ENCODE measurements at regions of chr1 and their contacts with region 1.

Region 1: GRCh38 chr1:161738627-161739287 is 10.8 kb upstream of the DUSP12 start:
- DNase-seq: peak; percentile 48 to 85 (median 59)
- H3K4me3 ChIP-seq: no peak overlapping the region
- H3K4me3 Mint-ChIP-seq: peak overlapping the region in 5 of 7 donors; percentile 45 to 75 (median 66)
- H3K27ac ChIP-seq: no peak overlapping the region
- H3K27ac Mint-ChIP-seq: peak overlapping the region; percentile 51 to 89 (median 86)
- H3K4me1 ChIP-seq: peaks cover 31% of the 10 kb centered on the region
- H3K4me1 Mint-ChIP-seq: peaks cover 26 to 48% (median 44%) of the 10 kb centered on the region in 3 donors
- H3K27me3 ChIP-seq: no peaks in the 10 kb centered on the region
- H3K27me3 Mint-ChIP-seq: peaks cover 0 to 2% of the 10 kb centered on the region in 2 donors

Region 2: GRCh38 chr1:161132410-161133219 is 606.1 kb before region 1 on chr1 and contains the start of gene DEDD:
- CTCF ChIA-PET with region 1: no interaction called
- POLR2A ChIA-PET with region 1: no interaction called
- DNase-seq: peak; percentile 84 to 95 (median 91)
- H3K4me3 ChIP-seq: peak within 1 kb of the TSS; percentile 98
- H3K4me3 Mint-ChIP-seq: no peak within 1 kb of the TSS
- H3K27ac ChIP-seq: peak within 1 kb of the TSS; percentile 84
- H3K27ac Mint-ChIP-seq: peak within 1 kb of the TSS in 4 of 8 donors; percentile 91 to 98 (median 96)
- H3K4me1 ChIP-seq: peaks cover 35% of the 10 kb centered on the region
- H3K4me1 Mint-ChIP-seq: peaks cover 33 to 46% (median 44%) of the 10 kb centered on the region in 3 donors
- H3K27me3 ChIP-seq: no peaks in the 10 kb centered on the region
- H3K27me3 Mint-ChIP-seq: no peaks in the 10 kb centered on the region
- total RNA-seq, gene DEDD: 41.0 to 41.9 TPM

Region 3: DNA sequence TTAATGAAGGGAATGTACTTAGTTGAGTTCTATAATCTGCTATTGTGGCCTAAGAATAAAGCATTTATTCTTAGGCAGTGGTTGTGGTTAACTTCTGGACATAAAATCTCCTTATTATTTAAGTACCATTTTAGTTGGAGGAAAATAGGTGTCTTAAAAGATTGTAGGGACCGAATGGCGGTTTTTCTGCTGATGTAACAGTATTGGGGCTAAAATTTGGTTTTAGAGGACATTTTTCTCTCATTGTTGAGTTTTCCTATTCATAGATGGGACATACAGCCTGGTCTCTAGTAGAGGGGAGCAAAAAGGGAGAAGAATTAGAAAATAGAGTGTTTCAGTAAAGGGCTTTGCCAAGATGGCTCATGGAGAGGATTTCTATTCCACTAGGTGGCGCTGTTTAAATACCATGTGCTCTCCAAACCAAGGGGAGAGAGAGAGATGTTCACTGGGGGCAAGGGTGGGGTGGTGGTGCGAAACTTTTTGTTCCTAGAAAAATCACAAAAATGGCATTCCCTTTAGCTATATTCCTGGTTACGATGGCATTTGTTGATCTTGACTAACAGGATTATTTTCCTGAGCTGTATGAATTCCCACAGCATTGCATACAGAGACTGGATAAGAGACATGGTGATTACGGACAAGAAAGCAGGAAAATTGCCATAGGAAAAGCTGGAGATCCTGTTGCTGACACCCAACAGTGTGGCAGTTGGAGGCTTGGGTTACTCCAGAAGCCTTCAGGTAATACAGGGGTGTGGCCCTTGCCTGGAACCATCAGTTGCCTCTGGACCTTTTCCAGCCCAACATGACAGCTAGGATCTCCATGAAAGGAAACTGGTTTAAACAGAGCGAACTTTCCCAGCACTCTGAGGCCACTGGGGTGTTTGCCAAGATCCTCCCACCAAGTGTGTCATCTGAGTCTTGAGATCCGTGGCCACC is 251.7 kb before region 1 on chr1:
- CTCF ChIA-PET with region 1: interaction called, 13 read pairs
- POLR2A ChIA-PET with region 1: no interaction called
- DNase-seq: peak; percentile 13 to 65 (median 49)
- H3K4me3 ChIP-seq: no peak overlapping the region
- H3K4me3 Mint-ChIP-seq: no peak overlapping the region
- H3K27ac ChIP-seq: peak overlapping the region; percentile 34
- H3K27ac Mint-ChIP-seq: no peak overlapping the region
- H3K4me1 ChIP-seq: peaks cover 9% of the 10 kb centered on the region
- H3K4me1 Mint-ChIP-seq: peaks cover 14 to 25% (median 24%) of the 10 kb centered on the region in 3 donors
- H3K27me3 ChIP-seq: peaks cover 3% of the 10 kb centered on the region
- H3K27me3 Mint-ChIP-seq: peaks cover 16 to 28% of the 10 kb centered on the region in 2 donors

Region 4: GRCh38 chr1:161726596-161727457 is 11.9 kb before region 1 on chr1:
- CTCF ChIA-PET with region 1: interaction called, 102 read pairs
- POLR2A ChIA-PET with region 1: interaction called, 69 read pairs
- DNase-seq: peak; percentile 68 to 84 (median 70)
- H3K4me3 ChIP-seq: peak overlapping the region; percentile 93
- H3K4me3 Mint-ChIP-seq: peak overlapping the region; percentile 94 to 99 (median 97)
- H3K27ac ChIP-seq: peak overlapping the region; percentile 89
- H3K27ac Mint-ChIP-seq: peak overlapping the region; percentile 84 to 89 (median 86)
- H3K4me1 ChIP-seq: peaks cover 23% of the 10 kb centered on the region
- H3K4me1 Mint-ChIP-seq: peaks cover 36 to 48% (median 47%) of the 10 kb centered on the region in 3 donors
- H3K27me3 ChIP-seq: no peaks in the 10 kb centered on the region
- H3K27me3 Mint-ChIP-seq: no peaks in the 10 kb centered on the region

Region 5: GRCh38 chr1:161749509-161750407 is 11.0 kb after region 1 on chr1 and contains the start of gene DUSP12:
- CTCF ChIA-PET with region 1: interaction called, 27 read pairs
- POLR2A ChIA-PET with region 1: interaction called, 9 read pairs
- DNase-seq: peak; percentile 72 to 87 (median 83)
- H3K4me3 ChIP-seq: peak within 1 kb of the TSS; percentile 87
- H3K4me3 Mint-ChIP-seq: peak within 1 kb of the TSS; percentile 94 to 100 (median 99)
- H3K27ac ChIP-seq: peak within 1 kb of the TSS; percentile 76
- H3K27ac Mint-ChIP-seq: peak within 1 kb of the TSS; percentile 79 to 99 (median 96)
- H3K4me1 ChIP-seq: peaks cover 21% of the 10 kb centered on the region
- H3K4me1 Mint-ChIP-seq: peaks cover 28 to 52% (median 47%) of the 10 kb centered on the region in 3 donors
- H3K27me3 ChIP-seq: no peaks in the 10 kb centered on the region
- H3K27me3 Mint-ChIP-seq: peaks cover 0 to 1% of the 10 kb centered on the region in 2 donors
- total RNA-seq, gene DUSP12: 39.7 to 40.4 TPM